GM18951 (cell line): ENCODE measurements at regions of chr2 and their contacts with region 1.

Region 1: DNA sequence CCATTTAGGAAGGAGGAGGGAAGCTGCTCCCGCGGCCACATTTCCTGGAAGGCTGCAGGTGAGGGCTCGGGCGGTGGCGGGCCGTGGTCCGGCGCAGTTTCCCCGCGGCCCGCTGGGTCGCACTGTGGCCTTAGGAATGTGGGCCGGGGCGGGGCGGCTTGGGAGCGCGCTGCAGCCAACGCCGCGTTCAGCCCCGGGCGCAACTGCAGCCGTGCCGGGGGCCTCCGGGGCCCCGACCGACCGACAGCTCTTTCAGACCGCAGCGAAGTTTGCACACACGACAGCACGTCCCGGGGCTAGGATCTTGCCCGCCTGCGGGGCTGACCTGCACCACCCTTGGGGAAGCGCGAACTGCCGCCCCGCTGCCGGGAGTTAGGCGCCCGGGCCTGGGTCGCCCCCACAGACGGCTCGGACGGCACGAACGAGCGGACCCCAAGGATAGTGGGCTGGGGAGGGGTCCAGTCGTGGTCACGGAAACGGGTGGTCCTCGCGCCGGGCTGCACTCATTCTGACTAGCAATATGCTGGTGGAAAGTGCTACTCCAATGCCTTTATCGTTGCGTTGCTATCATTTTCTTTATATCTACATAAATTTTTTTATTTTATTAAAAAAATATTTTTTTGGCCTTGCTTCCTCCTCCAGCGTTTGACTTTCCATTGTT is 69.9 kb upstream of the DLX2 start:
- POLR2A ChIP-seq: no peak

Region 2: DNA sequence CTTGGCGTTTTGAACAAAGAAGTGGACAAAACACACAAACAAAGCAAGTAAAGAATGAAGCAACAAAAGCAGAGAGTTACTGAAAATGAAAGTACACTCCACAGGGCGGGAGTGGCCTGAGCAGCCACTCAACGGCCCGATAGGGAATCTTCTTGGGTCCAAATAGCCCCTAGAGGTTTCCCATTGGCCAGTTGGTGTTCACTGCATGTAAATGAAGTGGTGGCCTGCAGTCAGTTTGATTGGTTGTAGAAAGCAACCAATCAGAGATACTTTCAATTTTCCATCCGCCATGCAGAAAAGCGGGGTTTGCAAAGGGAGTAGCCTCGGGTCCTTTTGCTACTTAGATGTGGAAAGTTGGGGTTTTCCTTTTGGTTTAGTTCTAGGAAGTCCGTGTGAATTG is 618.8 kb before region 1 on chr2:
- in situ Hi-C with region 1: no loop called
- POLR2A ChIP-seq: no peak

Region 3: DNA sequence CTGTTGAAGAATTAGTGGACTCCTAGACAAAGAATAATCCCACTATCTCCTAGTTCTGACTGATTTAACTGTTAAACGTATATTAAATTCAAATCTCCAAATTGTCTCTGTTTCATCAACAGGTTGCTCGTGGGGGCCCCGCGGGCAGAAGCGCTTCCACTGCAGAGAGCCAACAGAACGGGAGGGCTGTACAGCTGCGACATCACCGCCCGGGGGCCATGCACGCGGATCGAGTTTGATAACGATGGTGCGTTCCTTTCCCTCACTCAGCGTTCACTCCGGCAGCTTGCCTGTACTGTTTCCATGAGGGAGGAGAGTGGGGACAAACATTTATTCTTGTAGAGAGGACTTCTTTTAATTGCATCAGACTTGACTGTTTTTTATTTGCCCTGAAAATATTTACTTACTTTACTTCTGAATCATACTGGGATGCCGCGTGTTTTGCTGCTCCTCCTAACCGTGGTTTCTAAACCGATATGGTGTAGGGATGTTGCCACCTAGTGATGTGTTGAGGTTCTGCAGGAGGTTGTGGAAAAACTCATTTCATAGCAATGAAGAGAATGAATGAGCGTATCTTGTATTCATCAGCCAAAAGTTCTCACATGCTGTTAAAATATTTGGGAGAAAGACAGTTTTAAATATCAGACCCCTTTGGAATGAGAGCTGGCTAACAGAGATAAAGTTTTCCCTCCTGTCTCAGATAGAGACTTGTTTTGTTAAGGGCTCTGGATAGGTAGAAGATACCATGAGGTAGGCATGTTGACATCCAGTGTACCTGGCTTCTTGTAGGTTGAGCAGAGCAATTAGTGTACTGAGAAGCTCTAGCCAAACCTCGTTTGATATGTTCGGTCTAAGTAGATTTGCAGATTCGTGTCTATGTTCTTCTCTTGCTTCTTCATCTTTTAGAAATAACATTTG is 293.0 kb after region 1 on chr2:
- in situ Hi-C with region 1: loop called (anchors 25 kb)
- POLR2A ChIP-seq: no peak